ENCODE measurements at regions of chr9 and their contacts with region 1.

Region 1: DNA sequence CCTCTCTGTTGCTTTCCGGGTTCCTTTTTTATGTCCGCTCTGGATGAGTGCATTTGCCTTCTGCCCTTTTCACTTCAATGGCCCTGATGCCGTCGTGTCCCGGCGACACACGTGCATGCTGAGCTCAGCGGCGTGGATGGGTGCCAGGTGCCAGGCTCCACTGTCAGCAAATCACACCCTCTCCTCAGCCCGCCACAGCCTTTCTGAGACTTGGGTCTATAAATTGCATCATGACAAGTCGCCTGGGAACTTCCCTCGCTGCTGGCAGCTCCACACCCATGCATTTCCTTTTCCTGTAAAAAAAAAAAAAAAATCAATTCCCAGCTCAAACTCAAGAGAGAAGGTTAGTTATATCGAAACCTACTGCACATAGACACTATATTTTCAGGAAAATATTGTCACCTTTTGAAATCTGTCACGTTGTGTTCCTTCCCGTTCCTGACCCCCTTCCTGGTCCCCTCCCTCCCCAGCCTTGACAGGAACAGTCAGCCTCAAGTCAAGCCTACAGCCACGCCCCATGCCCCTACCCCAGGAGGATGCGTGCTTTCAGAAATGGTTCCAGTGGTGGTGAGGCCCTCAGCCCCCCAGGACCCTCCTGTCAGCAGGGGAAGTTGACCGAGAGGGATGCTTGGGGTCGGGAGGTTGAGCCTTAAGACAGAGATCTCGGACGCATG is 110.3 kb upstream of the PTCH1 start:
- DNase-seq: peak; percentile 66 to 81 (median 72)
- ATAC-seq: peak; percentile 88 to 96 (median 91)
- H3K4me3 ChIP-seq: peak overlapping the region in 4 of 12 donors; percentile 10 to 27 (median 20)
- H3K27ac ChIP-seq: peak overlapping the region; percentile 32 to 87 (median 72)
- H3K4me1 ChIP-seq: peaks cover 0 to 12% (median 0%) of the 10 kb centered on the region in 12 donors
- H3K27me3 ChIP-seq: no peaks in the 10 kb centered on the region
- CTCF ChIP-seq: no peak
- POLR2A ChIP-seq: no peak

Region 2: DNA sequence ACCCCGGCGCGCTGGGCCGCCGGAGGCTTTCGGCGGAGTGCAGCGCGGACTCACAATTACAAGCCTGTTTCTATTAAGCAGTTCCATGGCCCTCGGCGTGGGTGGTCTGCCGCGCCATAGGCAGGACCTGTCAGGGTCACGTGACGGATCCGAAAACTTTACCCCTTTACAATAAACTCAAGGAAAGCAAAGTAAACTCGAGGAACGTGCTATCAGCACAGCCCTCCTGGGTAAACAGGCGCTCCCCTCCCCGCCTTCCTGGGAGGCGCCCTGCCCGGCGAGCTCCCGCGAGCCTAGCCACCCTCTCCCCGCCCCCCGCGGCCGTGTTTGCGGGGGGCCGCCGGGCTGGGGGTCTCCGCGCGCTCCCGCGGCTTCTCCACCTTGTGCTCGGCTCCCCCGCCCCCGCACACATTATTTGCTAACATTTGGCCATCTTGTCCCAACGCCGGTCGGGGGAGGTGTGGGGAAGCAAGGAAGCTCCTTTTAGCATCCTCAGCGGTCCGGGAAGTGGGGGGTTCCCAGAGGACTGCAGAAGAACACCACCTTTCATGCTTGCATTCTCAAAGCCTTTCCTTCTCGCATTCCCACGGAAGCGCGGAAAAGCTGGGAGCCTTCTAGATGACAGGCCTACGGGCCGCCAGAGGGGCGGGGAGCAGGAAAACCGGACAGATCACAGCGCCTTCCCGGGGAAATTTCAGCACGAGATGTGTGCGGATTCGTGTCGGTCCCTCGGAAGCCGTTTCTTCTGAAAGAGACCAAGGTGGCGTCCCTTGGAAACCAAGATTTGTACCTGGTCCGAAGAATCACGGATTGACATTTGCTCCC is 110.1 kb before region 1 on chr9 and contains the start of gene PTCH1:
- intact Hi-C with region 1: loop called in 3 of 10 experiments (anchors 5 to 10 kb)
- DNase-seq: peak in 4 of 5 donors; percentile 36 to 51 (median 44)
- ATAC-seq: peak; percentile 62 to 81 (median 72)
- H3K4me3 ChIP-seq: peak within 1 kb of the TSS; percentile 28 to 70 (median 60)
- H3K27ac ChIP-seq: peak within 1 kb of the TSS in 6 of 12 donors; percentile 25 to 64 (median 38)
- H3K4me1 ChIP-seq: peaks cover 3 to 29% (median 14%) of the 10 kb centered on the region in 12 donors
- H3K27me3 ChIP-seq: peaks cover 0 to 34% (median 0%) of the 10 kb centered on the region in 9 donors
- CTCF ChIP-seq: peak in 1 of 12 donors; percentile 10
- POLR2A ChIP-seq: no peak
- total RNA-seq, gene PTCH1: 2.9 to 15.2 (median 6.6) TPM

Region 3: DNA sequence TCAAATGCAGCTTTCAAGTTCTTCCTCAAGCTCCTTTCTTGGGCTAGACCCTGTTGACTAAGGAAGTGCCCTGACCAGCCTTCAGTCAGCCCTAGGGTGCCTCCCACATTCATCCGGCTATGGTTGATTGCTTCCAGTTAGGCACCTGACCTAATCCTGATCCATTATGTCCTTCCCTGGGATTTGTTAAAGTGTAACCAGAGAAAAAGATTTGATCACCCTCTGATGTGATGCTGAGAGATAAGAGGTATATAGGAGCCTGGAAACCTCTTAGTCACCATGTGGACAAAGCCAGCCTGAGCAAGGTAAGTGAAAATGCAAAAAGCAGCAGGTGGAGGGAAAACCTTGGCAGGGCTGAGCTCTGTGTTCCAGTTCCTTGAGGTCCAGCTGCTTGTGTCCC is 69.7 kb after region 1 on chr9:
- intact Hi-C with region 1: no loop called
- DNase-seq: no peak
- ATAC-seq: no peak
- H3K4me3 ChIP-seq: no peak overlapping the region
- H3K27ac ChIP-seq: no peak overlapping the region
- H3K4me1 ChIP-seq: no peaks in the 10 kb centered on the region
- H3K27me3 ChIP-seq: peaks cover 0 to 6% (median 0%) of the 10 kb centered on the region in 9 donors
- CTCF ChIP-seq: no peak
- POLR2A ChIP-seq: no peak

Measured in heart left ventricle (tissue), 16 donors.